Pancreas (tissue), 10 donors: ENCODE measurements at regions of chr7 and their contacts with region 1.

Region 1: DNA sequence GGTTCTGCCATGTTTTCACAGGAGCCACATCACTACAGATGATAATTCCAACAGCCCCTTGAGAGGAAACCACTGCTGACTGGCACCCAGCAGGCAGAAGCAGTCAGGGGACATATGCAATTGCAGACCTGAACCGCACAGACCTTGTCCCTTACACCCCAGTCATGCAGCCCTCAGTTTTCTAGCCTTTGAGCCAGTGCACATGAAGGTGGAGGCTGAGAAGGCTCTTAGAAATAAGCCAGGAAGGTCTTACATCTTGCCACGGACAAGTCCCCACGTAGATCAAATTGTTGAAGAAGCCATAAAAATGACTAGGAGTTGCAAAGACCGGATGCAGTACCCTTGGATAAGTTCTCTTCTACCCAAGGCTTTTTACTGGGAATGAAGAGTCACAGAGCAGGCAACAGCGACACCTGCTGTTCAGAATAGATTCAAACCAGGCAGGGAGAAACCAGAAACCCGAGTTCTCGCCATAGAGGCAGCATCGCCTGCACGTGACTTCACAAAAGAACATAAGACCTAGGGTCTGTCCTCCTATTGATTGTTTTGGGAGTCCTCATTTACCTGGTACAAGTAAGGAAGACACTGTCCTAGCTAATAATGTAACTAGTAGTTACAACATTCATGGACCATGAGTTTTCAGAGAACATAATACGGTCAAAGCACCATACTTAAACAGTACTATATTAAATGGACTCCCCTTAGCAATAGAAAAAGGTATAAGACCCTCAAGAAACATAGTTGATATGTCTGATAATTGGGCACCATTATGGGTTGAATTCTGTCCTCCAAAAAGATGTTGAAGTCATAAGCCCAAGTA is 11.1 kb downstream of the STEAP1B start:
- DNase-seq: peak in 5 of 6 donors; percentile 45 to 81 (median 59)
- ATAC-seq: peak; percentile 93 to 99 (median 96)
- H3K4me3 ChIP-seq: no peak overlapping the region
- H3K27ac ChIP-seq: no peak overlapping the region
- H3K4me1 ChIP-seq: no peaks in the 10 kb centered on the region
- H3K27me3 ChIP-seq: no peaks in the 10 kb centered on the region
- CTCF ChIP-seq: peak; percentile 76 to 90 (median 84)

Region 2: DNA sequence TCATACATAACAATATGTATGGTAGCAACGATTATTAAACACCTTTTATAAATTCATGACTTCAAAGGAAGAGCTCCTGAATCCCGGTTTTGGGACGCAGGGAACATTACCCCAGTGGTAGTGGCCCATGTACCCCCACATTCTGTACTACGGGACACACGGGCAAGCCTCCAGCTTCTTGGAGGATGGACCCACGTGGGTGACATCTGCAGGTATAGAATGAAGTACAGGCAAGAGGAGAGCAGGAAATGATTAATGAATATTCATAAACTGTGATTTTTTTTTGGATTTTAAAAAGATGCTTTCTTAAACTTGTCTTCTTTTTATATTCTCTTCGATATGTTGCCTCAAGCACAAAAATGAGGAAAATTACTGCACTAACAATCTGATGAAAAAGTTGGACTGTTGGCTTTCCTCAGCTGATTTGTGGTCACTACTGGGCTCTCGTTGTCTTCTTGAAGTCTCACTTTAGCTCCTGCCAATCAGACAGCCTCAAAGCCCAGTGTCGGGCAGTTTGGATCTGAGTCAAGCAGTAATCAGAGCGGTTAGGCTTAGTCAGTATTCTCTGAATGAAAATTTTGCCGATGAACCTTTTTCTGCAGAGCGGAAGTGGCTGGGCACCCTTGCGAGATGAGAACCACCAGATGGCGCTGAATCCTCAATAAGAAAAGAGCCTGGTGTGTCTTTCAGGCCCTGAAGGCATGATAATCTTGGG is 385.4 kb before region 1 on chr7:
- intact Hi-C with region 1: loop called in 1 of 3 experiments (anchors 10 kb)
- DNase-seq: peak in 4 of 6 donors; percentile 34 to 60 (median 43)
- ATAC-seq: peak; percentile 66 to 87 (median 82)
- H3K4me3 ChIP-seq: no peak overlapping the region
- H3K27ac ChIP-seq: no peak overlapping the region
- H3K4me1 ChIP-seq: no peaks in the 10 kb centered on the region
- H3K27me3 ChIP-seq: no peaks in the 10 kb centered on the region
- CTCF ChIP-seq: peak; percentile 14 to 59 (median 48)

Region 3: GRCh38 chr7:22110227-22110839 is 378.5 kb before region 1 on chr7:
- intact Hi-C with region 1: loop called (anchors 5 to 10 kb)
- DNase-seq: peak in 4 of 6 donors; percentile 31 to 74 (median 56)
- ATAC-seq: peak; percentile 70 to 93 (median 85)
- H3K4me3 ChIP-seq: no peak overlapping the region
- H3K27ac ChIP-seq: no peak overlapping the region
- H3K4me1 ChIP-seq: no peaks in the 10 kb centered on the region
- H3K27me3 ChIP-seq: no peaks in the 10 kb centered on the region
- CTCF ChIP-seq: peak; percentile 19 to 58 (median 52)

Region 4: GRCh38 chr7:22377703-22378102 is 111.2 kb before region 1 on chr7:
- intact Hi-C with region 1: no loop called
- DNase-seq: no peak
- ATAC-seq: no peak
- H3K4me3 ChIP-seq: no peak overlapping the region
- H3K27ac ChIP-seq: no peak overlapping the region
- H3K4me1 ChIP-seq: peaks cover 0 to 10% (median 0%) of the 10 kb centered on the region in 3 donors
- H3K27me3 ChIP-seq: no peaks in the 10 kb centered on the region
- CTCF ChIP-seq: no peak